ENCODE measurements at regions of chr15 and their contacts with region 1.

Region 1: DNA sequence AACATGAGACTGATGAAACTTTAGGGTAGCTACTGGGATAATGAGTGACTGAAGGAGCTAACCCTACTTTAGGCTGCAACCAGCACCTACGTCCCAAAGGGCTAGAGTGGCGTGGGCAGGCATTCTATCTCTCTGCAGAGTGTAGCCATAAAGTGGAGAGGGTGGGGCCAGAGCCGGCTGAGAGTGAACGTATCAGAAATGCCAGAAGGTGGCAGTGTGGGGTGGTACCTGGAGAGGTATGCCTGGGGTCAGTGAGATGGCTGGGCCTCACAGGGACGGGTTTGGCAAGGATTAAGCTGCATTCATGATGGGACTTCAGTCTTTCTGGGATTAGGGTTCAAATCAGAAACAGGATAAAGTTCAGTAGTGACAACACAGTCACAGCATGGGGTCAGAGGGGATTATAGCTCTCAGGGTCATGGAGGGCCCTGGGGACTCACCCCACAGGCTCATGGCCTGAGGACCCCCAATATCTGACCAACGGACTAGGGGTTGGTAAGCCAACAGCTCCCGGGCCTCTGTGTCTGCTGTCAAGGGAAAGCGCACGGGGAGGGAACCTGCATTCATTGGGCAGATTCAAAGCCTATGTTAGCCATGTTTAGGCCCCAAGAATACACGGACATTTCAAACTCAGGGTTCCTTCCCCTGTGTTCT is 86.5 kb upstream of the FOXB1 start:
- DNase-seq: peak; percentile 85
- H3K4me3 Mint-ChIP-seq: no peak overlapping the region
- H3K27ac Mint-ChIP-seq: no peak overlapping the region
- H3K4me1 Mint-ChIP-seq: peaks cover 26% of the 10 kb centered on the region
- H3K27me3 Mint-ChIP-seq: peaks cover 3% of the 10 kb centered on the region

Region 2: GRCh38 chr15:59678620-59679019 is 239.0 kb before region 1 on chr15:
- CTCF ChIA-PET with region 1: no interaction called
- POLR2A ChIA-PET with region 1: no interaction called
- intact Hi-C with region 1: no loop called
- DNase-seq: no peak
- H3K4me3 Mint-ChIP-seq: no peak overlapping the region
- H3K27ac Mint-ChIP-seq: peak overlapping the region; percentile 74
- H3K4me1 Mint-ChIP-seq: peaks cover 18% of the 10 kb centered on the region
- H3K27me3 Mint-ChIP-seq: no peaks in the 10 kb centered on the region

Region 3: DNA sequence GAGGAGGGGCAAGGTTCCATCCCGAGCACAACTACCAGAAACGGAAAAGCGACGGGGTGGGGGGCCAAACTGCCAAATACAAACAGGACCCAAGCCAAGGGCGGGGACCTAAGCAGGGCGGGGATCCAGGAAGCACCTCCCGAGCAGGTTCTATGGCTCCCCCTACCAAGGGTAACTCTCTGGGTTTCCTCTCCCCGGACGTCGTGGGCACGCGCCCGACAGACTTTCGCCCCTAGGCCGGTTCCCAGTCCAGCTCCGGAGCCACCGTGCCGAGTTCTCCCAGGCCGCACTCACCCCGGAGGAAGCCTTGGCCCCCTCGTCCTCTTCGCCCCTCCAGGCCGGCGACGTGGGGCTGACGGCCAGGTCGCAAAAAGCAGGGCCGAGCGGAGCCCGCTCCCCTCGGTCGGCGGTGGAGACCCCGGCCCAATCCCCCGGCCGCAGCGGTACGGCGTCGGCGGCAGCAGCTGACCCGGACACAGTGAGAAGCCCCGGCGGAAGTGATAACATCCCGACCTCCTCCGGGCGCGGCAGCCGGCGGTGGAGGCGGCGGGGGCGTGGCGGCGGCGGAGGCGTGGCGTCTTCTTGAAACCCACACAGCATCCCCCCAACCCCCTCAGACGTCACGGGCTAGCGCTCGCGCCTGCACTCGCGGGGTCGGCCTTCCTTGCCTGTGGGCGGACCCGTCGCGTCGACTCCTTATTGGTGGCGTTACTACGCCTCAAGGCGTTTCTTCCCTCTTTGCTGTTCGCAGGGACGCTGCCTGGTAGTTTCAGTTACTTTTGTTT is 228.6 kb before region 1 on chr15 and contains the start of gene BNIP2:
- CTCF ChIA-PET with region 1: interaction called, 8 read pairs
- POLR2A ChIA-PET with region 1: no interaction called
- intact Hi-C with region 1: loop called (anchors 1 kb)
- DNase-seq: peak; percentile 98
- H3K4me3 Mint-ChIP-seq: peak within 1 kb of the TSS; percentile 90
- H3K27ac Mint-ChIP-seq: peak within 1 kb of the TSS; percentile 93
- H3K4me1 Mint-ChIP-seq: peaks cover 43% of the 10 kb centered on the region
- H3K27me3 Mint-ChIP-seq: no peaks in the 10 kb centered on the region
- total RNA-seq, gene BNIP2: 55.2 to 58.0 TPM

Region 4: GRCh38 chr15:59751552-59752413 is 165.8 kb before region 1 on chr15:
- CTCF ChIA-PET with region 1: interaction called, 12 read pairs
- POLR2A ChIA-PET with region 1: no interaction called
- intact Hi-C with region 1: loop called (anchors 10 kb)
- DNase-seq: no peak
- H3K4me3 Mint-ChIP-seq: no peak overlapping the region
- H3K27ac Mint-ChIP-seq: no peak overlapping the region
- H3K4me1 Mint-ChIP-seq: peaks cover 8% of the 10 kb centered on the region
- H3K27me3 Mint-ChIP-seq: no peaks in the 10 kb centered on the region

Region 5: DNA sequence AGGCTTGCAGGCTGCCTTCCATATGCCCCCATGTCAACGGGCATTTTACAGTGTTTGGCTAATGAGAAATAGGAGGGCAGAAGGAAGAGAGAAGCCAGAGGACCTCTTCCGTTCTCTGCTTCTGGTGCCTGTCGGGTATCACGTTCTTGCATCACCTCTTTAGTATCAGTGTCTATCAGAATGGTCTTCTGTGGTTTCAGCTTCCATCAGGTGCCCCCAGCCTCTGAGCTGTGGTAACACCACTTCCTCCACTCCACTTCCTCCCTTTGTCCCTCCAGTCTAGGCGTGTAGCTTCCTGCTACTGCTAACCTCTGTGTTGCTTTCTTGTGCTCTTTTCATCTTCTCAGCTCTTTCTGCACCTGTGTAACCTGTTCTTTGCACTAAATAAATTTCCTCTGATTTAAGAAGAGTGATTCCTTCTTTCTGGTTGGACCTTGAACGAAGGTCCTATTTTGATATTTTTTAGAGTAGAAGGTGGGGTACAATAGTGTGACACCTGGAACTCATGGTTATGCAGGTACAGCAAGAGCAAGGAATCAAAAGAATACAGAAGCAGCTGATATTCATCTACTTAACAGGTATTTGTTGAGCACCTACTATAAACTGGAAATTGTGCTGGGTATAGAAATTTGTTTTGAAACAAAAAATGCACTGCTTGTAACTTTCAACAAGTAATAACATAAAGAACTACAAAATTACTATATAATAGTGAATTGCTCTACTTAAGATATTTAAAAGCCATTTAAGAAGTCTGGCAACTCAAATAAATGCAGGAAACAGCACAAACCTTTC is 59.0 kb after region 1 on chr15:
- CTCF ChIA-PET with region 1: interaction called, 4 read pairs
- POLR2A ChIA-PET with region 1: no interaction called
- intact Hi-C with region 1: loop called (anchors 5 kb)
- DNase-seq: peak; percentile 70
- H3K4me3 Mint-ChIP-seq: peak overlapping the region; percentile 37
- H3K27ac Mint-ChIP-seq: peak overlapping the region; percentile 59
- H3K4me1 Mint-ChIP-seq: peaks cover 16% of the 10 kb centered on the region
- H3K27me3 Mint-ChIP-seq: peaks cover 3% of the 10 kb centered on the region

Region 6: DNA sequence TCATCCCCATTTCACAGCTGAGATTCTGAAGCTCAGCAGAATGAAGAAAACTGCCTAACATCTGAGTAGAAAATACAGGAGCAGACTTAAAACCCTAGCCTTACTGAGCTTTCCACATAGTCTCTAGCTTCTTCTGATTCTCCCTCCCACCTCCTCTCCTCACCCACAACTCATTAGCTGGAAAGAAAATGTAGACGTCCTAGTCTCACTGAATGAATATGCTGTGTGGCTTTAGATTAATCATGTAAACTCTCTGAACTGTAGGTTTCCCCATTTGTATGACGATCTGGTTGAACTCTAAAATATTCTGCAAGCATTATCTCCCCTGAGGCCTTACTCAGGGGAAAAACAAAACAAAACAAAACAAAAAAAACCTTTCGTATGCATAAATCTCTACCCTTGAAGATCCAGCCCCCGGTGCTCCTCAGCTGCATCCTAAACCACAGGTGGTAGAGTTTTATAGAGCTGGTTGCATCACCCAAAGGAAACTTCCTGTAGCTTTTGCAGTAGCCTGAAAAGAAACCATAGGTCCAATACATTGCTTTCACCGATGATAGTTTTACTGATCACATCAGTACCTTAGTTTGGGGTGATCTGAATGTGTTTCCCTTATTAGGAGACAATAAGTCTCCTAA is 127.1 kb after region 1 on chr15:
- CTCF ChIA-PET with region 1: no interaction called
- POLR2A ChIA-PET with region 1: no interaction called
- intact Hi-C with region 1: loop called (anchors 1 kb)
- DNase-seq: peak; percentile 57
- H3K4me3 Mint-ChIP-seq: peak overlapping the region; percentile 46
- H3K27ac Mint-ChIP-seq: peak overlapping the region; percentile 75
- H3K4me1 Mint-ChIP-seq: peaks cover 19% of the 10 kb centered on the region
- H3K27me3 Mint-ChIP-seq: peaks cover 4% of the 10 kb centered on the region

Region 7: DNA sequence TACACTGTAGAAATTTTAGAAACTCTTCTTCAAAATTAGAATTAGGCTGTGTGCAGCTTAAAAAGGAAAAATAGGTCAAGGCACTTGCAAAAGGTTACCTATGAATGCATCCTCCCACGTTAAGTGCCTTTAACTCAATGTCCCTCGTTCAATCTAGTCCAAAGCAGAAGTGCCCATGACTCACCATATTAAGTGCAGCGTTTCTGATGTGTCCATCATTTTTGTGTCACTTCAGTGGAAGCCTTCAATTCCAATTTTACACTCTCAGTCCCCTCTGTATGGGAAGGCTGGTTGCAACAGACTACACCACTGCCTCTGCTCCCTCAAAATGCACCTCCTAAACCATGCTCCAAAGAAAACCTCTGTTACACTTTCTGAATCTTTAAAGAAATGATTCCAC is 139.9 kb after region 1 on chr15:
- CTCF ChIA-PET with region 1: no interaction called
- POLR2A ChIA-PET with region 1: no interaction called
- intact Hi-C with region 1: no loop called
- DNase-seq: no peak
- H3K4me3 Mint-ChIP-seq: no peak overlapping the region
- H3K27ac Mint-ChIP-seq: no peak overlapping the region
- H3K4me1 Mint-ChIP-seq: no peaks in the 10 kb centered on the region
- H3K27me3 Mint-ChIP-seq: peaks cover 23% of the 10 kb centered on the region

Region 8: DNA sequence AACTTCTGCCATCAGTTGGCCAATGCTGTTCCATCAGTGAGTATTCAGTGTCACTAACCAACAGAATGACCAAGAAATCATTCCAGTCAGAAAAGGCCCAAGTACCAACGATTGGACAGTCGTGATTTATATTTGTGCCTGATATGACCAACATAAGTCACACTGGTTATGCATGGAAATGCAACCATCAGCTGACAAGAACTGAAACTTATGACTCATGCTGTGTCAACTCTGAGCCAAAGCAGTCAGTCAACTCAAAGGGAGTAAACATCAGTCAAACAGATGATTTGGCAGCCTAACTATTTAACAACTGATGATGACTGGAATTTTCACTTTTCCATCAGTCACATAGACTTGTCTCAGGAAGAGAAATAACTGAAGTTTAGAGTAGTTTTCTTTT is 337.8 kb after region 1 on chr15:
- CTCF ChIA-PET with region 1: interaction called, 3 read pairs
- POLR2A ChIA-PET with region 1: no interaction called
- intact Hi-C with region 1: loop called (anchors 1 kb)
- DNase-seq: peak; percentile 60
- H3K4me3 Mint-ChIP-seq: no peak overlapping the region
- H3K27ac Mint-ChIP-seq: no peak overlapping the region
- H3K4me1 Mint-ChIP-seq: peaks cover 3% of the 10 kb centered on the region
- H3K27me3 Mint-ChIP-seq: peaks cover 30% of the 10 kb centered on the region

Region 9: GRCh38 chr15:60478566-60479360 is 561.1 kb after region 1 on chr15 and contains the start of gene ICE2:
- CTCF ChIA-PET with region 1: interaction called, 3 read pairs
- POLR2A ChIA-PET with region 1: no interaction called
- intact Hi-C with region 1: loop called (anchors 5 kb)
- DNase-seq: peak; percentile 98
- H3K4me3 Mint-ChIP-seq: peak within 1 kb of the TSS; percentile 99
- H3K27ac Mint-ChIP-seq: peak within 1 kb of the TSS; percentile 98
- H3K4me1 Mint-ChIP-seq: peaks cover 55% of the 10 kb centered on the region
- H3K27me3 Mint-ChIP-seq: no peaks in the 10 kb centered on the region
- total RNA-seq, gene ICE2: 66.0 to 71.3 TPM